Ovary (tissue), 10 donors: ENCODE measurements at regions of chr3 and their contacts with region 1.

Region 1: DNA sequence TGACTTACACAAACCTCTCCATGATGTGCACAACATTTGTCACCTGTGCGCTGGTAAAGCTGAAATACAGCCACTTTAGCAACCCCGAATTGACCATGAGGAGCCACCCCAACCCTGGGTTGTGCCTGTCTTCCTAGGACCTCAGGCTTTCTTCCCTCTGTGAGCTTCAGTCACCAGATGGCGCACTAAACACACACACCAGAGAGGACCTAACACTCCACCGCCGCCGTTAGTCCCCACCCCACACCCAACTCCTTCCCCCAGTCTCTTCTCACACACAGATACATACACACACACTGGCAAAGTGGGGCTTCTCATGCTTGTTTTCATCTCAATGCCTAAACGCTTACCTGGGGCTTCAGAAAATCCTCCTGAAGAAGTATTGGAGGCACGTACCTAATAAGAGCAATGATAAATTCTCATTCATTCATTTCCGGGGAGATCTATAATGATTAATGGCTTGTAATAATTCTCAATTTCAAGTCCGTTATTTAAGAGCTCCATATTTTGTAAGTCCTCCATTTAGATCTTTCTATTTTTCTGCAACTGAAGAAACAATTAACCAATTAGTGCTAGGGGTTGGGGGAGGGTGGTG is 2.1 kb upstream of the CCDC80 start:
- DNase-seq: peak; percentile 79 to 91 (median 85)
- H3K4me3 ChIP-seq: no peak overlapping the region
- H3K27ac ChIP-seq: no peak overlapping the region
- H3K4me1 ChIP-seq: peaks cover 10% of the 10 kb centered on the region
- H3K27me3 ChIP-seq: no peaks in the 10 kb centered on the region
- CTCF ChIP-seq: peak; percentile 59 to 75 (median 74)
- EP300 ChIP-seq: no peak
- POLR2A ChIP-seq: no peak

Region 2: DNA sequence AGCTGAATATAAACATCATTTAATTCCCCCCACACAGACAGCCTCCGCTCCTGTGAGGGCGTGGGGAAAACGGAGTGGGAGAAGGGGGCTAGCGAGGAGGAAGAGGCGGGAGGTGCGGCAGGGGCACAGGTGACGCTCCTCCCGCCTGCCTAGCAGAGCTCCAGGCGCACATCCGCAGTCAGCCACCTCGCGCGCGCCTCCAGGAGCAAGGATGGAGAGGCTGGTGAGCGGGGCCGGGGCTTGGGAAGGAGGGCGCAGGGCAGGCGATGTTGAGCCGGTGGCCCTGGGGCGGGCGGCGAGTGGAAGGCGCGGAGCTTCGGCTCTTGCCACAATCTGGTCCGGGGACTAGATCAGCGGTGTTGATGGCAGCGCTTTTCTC is 310.0 kb before region 1 on chr3 and contains the start of gene CD200:
- intact Hi-C with region 1: loop called in 1 of 4 experiments (anchors 5 kb)
- DNase-seq: peak; percentile 75 to 82 (median 79)
- H3K4me3 ChIP-seq: peak within 1 kb of the TSS; percentile 45
- H3K27ac ChIP-seq: peak within 1 kb of the TSS; percentile 88
- H3K4me1 ChIP-seq: peaks cover 3% of the 10 kb centered on the region
- H3K27me3 ChIP-seq: no peaks in the 10 kb centered on the region
- CTCF ChIP-seq: no peak
- EP300 ChIP-seq: no peak
- POLR2A ChIP-seq: peak; percentile 41
- total RNA-seq, gene CD200: 9.6 to 36.4 (median 11.3) TPM

Region 3: DNA sequence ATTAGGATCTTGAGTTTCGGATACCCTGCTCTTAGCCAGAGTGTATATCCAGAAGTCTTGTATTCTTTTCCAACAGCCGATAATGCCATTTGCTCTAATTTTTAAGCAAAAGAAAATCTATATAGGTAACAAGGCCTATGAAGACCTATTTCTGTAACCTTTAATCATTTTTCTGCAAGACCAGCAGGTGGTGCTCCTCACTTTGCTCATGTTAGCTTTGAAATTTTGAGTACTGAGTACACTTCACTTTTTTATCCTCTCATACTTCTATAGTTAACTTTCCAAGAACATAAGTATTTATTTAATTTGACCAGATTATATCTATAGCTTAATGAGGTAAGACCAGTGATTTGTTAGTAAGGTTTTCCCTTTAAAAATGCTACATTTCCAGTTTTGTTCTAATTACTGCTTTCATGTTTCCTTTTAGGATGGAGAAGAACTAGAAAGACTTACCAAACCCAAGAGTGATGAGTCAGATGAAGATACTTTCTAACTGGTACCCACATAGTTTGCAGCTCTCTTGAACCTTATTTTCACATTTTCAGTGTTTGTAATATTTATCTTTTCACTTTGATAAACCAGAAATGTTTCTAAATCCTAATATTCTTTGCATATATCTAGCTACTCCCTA is 60.6 kb before region 1 on chr3:
- intact Hi-C with region 1: loop called in 2 of 4 experiments (anchors 10 kb)
- DNase-seq: peak in 4 of 5 donors; percentile 34 to 48 (median 42)
- H3K4me3 ChIP-seq: no peak overlapping the region
- H3K27ac ChIP-seq: no peak overlapping the region
- H3K4me1 ChIP-seq: peaks cover 2% of the 10 kb centered on the region
- H3K27me3 ChIP-seq: no peaks in the 10 kb centered on the region
- CTCF ChIP-seq: peak; percentile 13 to 60 (median 46)
- EP300 ChIP-seq: no peak
- POLR2A ChIP-seq: no peak

Region 4: DNA sequence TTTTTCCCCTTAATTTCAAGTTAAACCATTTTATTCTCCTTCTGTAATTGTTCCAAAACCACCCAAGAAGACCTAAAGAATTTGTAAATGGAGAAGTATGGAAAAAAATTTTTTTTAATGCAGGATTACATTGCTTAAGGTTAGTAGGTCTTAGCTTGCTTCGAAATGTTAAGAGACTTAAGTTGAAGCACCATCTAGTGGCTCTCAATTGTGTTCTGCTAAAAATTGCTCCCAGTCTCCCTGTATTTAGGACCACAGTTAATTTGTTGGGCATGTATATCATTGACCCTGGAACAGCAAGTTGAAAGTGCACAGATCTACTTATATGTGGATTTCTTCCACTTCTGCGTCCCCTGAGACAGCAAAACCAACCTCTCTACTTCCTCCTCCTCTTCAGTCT is 171.3 kb after region 1 on chr3:
- intact Hi-C with region 1: loop called (anchors 5 kb)
- DNase-seq: no peak
- H3K4me3 ChIP-seq: no peak overlapping the region
- H3K27ac ChIP-seq: no peak overlapping the region
- H3K4me1 ChIP-seq: peaks cover 11% of the 10 kb centered on the region
- H3K27me3 ChIP-seq: no peaks in the 10 kb centered on the region
- CTCF ChIP-seq: peak in 2 of 3 donors; percentile 29 to 41
- EP300 ChIP-seq: no peak
- POLR2A ChIP-seq: no peak

Region 5: DNA sequence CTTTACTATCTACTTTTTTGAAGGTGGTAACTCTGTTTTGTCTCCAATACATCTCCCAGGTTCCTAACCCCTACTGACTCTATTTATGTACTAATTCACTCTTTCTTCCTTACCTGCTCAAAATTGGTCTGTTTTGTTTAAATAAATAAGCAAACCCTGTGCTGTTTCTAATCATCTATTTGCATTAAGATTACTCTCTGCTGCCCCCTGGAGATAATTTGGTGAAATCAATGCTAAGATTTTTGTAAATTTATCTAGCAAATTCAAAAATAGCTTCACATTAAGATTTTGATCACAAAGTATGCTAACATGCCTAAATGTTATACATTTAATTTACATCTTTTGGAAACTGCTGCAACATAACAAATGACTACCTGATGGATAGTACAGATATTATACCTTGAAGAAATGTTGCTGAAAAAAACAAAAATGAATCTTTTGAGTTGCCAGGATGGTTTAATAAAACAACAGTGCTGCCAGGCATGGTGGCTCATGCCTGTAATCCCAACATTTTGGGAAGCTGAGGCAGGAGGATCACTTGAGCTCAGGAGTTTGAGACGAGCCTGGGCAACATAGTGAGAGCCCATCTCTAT is 336.3 kb after region 1 on chr3:
- intact Hi-C with region 1: loop called in 3 of 4 experiments (anchors 5 to 10 kb)
- DNase-seq: no peak
- H3K4me3 ChIP-seq: no peak overlapping the region
- H3K27ac ChIP-seq: no peak overlapping the region
- H3K4me1 ChIP-seq: no peaks in the 10 kb centered on the region
- H3K27me3 ChIP-seq: no peaks in the 10 kb centered on the region
- CTCF ChIP-seq: peak; percentile 28 to 42 (median 39)
- EP300 ChIP-seq: no peak
- POLR2A ChIP-seq: no peak

Region 6: GRCh38 chr3:112984485-112984884 is 341.5 kb after region 1 on chr3:
- intact Hi-C with region 1: loop called in 3 of 4 experiments (anchors 5 to 10 kb)
- DNase-seq: no peak
- H3K4me3 ChIP-seq: no peak overlapping the region
- H3K27ac ChIP-seq: no peak overlapping the region
- H3K4me1 ChIP-seq: no peaks in the 10 kb centered on the region
- H3K27me3 ChIP-seq: no peaks in the 10 kb centered on the region
- CTCF ChIP-seq: no peak
- EP300 ChIP-seq: no peak
- POLR2A ChIP-seq: no peak